AG04450 (cell line): ENCODE measurements at regions of chr1 and their contacts with region 1.

Region 1: GRCh38 chr1:156860113-156860627 is 495 bp upstream of the NTRK1 start:
- DNase-seq: no peak
- H3K4me3 ChIP-seq: peak overlapping the region; percentile 32
- H3K27ac ChIP-seq: no peak overlapping the region
- H3K27me3 ChIP-seq: peaks cover 81% of the 10 kb centered on the region
- CTCF ChIP-seq: peak; percentile 78

Region 2: GRCh38 chr1:156927215-156928042 is 67.3 kb after region 1 on chr1:
- CTCF ChIA-PET with region 1: interaction called, 10 read pairs
- POLR2A ChIA-PET with region 1: no interaction called
- DNase-seq: peak; percentile 26
- H3K4me3 ChIP-seq: peak overlapping the region; percentile 50
- H3K27ac ChIP-seq: no peak overlapping the region
- H3K27me3 ChIP-seq: peaks cover 47% of the 10 kb centered on the region
- CTCF ChIP-seq: peak; percentile 81